Testis (tissue), 5 donors: ENCODE measurements at regions of chr1 and their contacts with region 1.

Region 1: DNA sequence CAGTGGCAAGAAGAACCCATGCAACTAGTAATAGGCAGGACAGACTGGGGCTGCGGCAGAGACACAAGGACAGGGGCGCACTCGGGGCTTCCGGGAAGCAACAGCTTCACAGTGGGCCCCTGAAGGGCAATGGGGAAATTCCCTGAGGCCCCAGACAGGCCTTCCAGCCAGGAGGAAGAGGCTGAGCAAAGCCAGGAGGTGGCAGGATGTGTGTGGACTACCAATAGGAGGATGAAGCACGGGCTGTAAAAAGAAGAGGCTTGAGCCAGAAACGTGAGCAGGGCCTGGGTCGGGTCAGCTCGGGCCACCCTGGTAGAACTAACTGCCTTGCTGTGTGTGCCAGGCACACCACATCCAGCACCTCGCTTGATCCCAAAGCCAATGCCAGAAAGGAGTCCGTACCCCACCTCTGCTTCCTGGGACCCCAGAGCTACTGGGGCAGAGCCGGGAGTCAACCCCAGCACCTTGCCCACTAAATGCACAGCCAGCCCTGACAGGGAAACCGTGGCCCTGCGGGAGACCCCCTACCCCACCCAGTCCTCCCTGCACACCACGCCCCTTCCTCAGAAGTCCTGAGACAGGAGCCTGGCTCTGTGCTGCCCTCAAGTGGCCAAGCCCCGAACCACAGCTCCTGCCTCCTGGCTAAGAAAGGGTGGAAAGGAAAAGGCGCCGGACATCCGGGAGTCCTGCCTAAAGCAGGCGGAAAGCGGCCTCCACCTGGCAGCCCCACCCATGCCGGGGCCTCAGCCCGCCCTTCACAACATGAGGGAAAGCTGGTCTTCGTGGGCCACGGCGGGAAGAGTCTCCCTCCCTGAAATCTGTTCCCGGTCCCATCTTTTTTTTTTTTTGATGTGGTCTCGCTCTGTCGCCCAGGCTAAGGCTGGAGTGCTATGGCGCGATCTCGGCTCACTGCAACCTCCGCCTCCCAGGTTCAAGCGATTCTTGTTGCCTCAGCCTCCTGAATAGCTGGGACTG is 33.7 kb downstream of the TTC39A start:
- DNase-seq: peak; percentile 95
- H3K4me3 ChIP-seq: peak overlapping the region; percentile 36 to 37
- H3K27ac ChIP-seq: no peak overlapping the region
- H3K4me1 ChIP-seq: peaks cover 14% of the 10 kb centered on the region
- H3K27me3 ChIP-seq: no peaks in the 10 kb centered on the region
- CTCF ChIP-seq: peak; percentile 76 to 97 (median 91)
- POLR2A ChIP-seq: no peak

Region 2: GRCh38 chr1:51192213-51192843 is 104.3 kb before region 1 on chr1:
- intact Hi-C with region 1: loop called (anchors 10 kb)
- DNase-seq: peak; percentile 88
- H3K4me3 ChIP-seq: no peak overlapping the region
- H3K27ac ChIP-seq: no peak overlapping the region
- H3K4me1 ChIP-seq: no peaks in the 10 kb centered on the region
- H3K27me3 ChIP-seq: no peaks in the 10 kb centered on the region
- CTCF ChIP-seq: peak; percentile 19 to 88 (median 75)
- POLR2A ChIP-seq: no peak

Region 3: DNA sequence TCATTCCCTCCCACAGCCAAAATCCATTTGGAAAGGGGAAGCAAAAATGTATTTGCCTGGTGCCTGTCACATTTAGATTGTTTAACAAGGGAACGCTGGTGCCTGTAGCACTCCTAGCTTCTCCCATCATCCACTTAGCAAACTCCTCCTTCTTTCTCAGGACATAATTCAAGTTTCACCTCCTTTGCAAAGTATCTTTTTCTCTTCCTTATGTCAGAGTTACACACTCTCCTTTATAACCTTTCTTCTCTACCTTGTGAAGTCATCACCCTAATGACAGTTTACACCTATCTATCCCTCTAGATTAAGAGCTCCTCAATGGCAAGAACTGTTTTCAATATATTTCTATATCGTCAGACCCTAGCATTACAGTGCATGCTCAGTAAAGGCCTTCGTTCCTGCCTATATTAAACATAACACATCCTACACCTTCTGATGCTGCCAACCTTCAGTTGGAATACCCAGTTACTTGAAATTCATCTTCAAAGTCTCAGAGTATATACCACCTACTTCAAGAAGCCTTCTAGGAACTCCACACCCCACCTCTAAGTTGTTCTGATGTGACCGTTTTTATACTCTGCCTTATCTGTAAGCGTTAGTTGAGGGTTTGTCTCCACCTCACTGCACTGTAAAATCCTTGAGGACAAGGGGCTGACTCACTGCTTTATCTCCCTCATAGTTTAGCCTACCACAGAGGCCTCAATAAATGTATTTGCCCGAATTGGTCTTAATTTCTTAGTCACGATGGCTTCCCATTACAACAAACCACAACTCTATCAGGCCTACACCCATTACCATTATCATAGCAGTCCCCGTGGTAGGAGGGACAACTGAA is 223.4 kb after region 1 on chr1:
- intact Hi-C with region 1: loop called (anchors 10 kb)
- DNase-seq: no peak
- H3K4me3 ChIP-seq: no peak overlapping the region
- H3K27ac ChIP-seq: peak overlapping the region in 1 of 2 donors; percentile 53
- H3K4me1 ChIP-seq: peaks cover 22% of the 10 kb centered on the region
- H3K27me3 ChIP-seq: no peaks in the 10 kb centered on the region
- CTCF ChIP-seq: no peak
- POLR2A ChIP-seq: no peak